Activated CD4-positive, alpha-beta memory T cell treated with anti-CD3 and anti-CD28 coated beads for 36 hours (primary cell): ENCODE measurements at regions of chr15 and their contacts with region 1.

Region 1: GRCh38 chr15:72473614-72474465 is at the start of gene ARIH1:
- DNase-seq: peak; percentile 96
- H3K4me3 Mint-ChIP-seq: peak within 1 kb of the TSS; percentile 92
- H3K27ac Mint-ChIP-seq: peak within 1 kb of the TSS; percentile 98
- H3K4me1 Mint-ChIP-seq: peaks cover 41% of the 10 kb centered on the region
- H3K27me3 Mint-ChIP-seq: no peaks in the 10 kb centered on the region
- total RNA-seq, gene ARIH1: 169 to 187 TPM

Region 2: GRCh38 chr15:72117486-72118399 is 356.1 kb before region 1 on chr15 and contains the start of gene MYO9A:
- CTCF ChIA-PET with region 1: no interaction called
- POLR2A ChIA-PET with region 1: no interaction called
- intact Hi-C with region 1: loop called (anchors 1 kb)
- DNase-seq: peak; percentile 100
- H3K4me3 Mint-ChIP-seq: peak within 1 kb of the TSS; percentile 98
- H3K27ac Mint-ChIP-seq: peak within 1 kb of the TSS; percentile 98
- H3K4me1 Mint-ChIP-seq: peaks cover 34% of the 10 kb centered on the region
- H3K27me3 Mint-ChIP-seq: no peaks in the 10 kb centered on the region
- total RNA-seq, gene MYO9A: 18.3 to 20.2 TPM

Region 3: GRCh38 chr15:72272213-72273002 is 201.4 kb before region 1 on chr15 and contains the start of gene PARP6:
- CTCF ChIA-PET with region 1: no interaction called
- POLR2A ChIA-PET with region 1: no interaction called
- intact Hi-C with region 1: loop called (anchors 2 kb)
- DNase-seq: peak; percentile 99
- H3K4me3 Mint-ChIP-seq: peak within 1 kb of the TSS; percentile 84
- H3K27ac Mint-ChIP-seq: peak within 1 kb of the TSS; percentile 89
- H3K4me1 Mint-ChIP-seq: peaks cover 33% of the 10 kb centered on the region
- H3K27me3 Mint-ChIP-seq: no peaks in the 10 kb centered on the region
- total RNA-seq, gene PARP6: 42.8 to 44.5 TPM

Region 4: GRCh38 chr15:72375847-72376581 is 97.8 kb before region 1 on chr15 and contains the start of gene HEXA:
- CTCF ChIA-PET with region 1: no interaction called
- POLR2A ChIA-PET with region 1: interaction called, 10 read pairs
- intact Hi-C with region 1: loop called (anchors 1 kb)
- DNase-seq: peak; percentile 98
- H3K4me3 Mint-ChIP-seq: peak within 1 kb of the TSS; percentile 91
- H3K27ac Mint-ChIP-seq: peak within 1 kb of the TSS; percentile 92
- H3K4me1 Mint-ChIP-seq: peaks cover 32% of the 10 kb centered on the region
- H3K27me3 Mint-ChIP-seq: peaks cover 1% of the 10 kb centered on the region
- total RNA-seq, gene HEXA: 57.5 to 59.8 TPM

Region 5: GRCh38 chr15:72445426-72445825 is 28.4 kb before region 1 on chr15:
- CTCF ChIA-PET with region 1: no interaction called
- POLR2A ChIA-PET with region 1: no interaction called
- intact Hi-C with region 1: no loop called
- DNase-seq: no peak
- H3K4me3 Mint-ChIP-seq: no peak overlapping the region
- H3K27ac Mint-ChIP-seq: no peak overlapping the region
- H3K4me1 Mint-ChIP-seq: no peaks in the 10 kb centered on the region
- H3K27me3 Mint-ChIP-seq: peaks cover 7% of the 10 kb centered on the region

Region 6: DNA sequence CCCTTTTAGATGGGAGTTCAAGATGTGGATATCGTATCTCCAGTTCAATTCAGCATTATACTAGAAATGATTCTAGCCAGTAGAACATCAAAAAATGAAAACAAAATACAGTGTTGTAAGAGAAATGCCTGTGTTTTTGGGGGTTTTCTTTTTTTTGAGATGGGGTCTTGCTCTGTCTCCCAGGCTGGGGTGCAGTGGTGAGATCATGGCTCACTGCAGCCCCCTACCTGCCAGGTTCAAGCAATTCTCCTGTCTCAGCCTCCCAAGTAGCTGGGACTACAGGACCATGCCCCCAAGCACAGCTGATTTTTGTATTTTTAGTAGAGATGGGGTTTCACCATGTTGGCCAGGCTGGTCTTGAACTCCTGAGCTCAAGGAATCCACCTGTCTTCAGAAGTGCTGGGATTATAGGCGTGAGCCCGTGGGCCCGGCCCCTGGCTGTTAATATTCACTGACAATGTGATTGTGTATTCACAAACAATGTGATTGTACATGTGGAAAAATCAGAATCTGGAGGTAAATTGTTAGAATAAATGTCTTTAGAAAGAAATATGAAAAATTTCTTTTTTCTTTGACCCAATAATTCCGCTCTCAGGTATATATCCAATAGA is 59.3 kb after region 1 on chr15:
- CTCF ChIA-PET with region 1: interaction called, 5 read pairs
- POLR2A ChIA-PET with region 1: no interaction called
- intact Hi-C with region 1: loop called (anchors 2 kb)
- DNase-seq: peak; percentile 40
- H3K4me3 Mint-ChIP-seq: no peak overlapping the region
- H3K27ac Mint-ChIP-seq: no peak overlapping the region
- H3K4me1 Mint-ChIP-seq: peaks cover 37% of the 10 kb centered on the region
- H3K27me3 Mint-ChIP-seq: no peaks in the 10 kb centered on the region

Region 7: GRCh38 chr15:72671535-72671934 is 197.7 kb after region 1 on chr15:
- CTCF ChIA-PET with region 1: no interaction called
- POLR2A ChIA-PET with region 1: no interaction called
- intact Hi-C with region 1: loop called (anchors 5 kb)
- DNase-seq: no peak
- H3K4me3 Mint-ChIP-seq: no peak overlapping the region
- H3K27ac Mint-ChIP-seq: no peak overlapping the region
- H3K4me1 Mint-ChIP-seq: peaks cover 4% of the 10 kb centered on the region
- H3K27me3 Mint-ChIP-seq: peaks cover 12% of the 10 kb centered on the region

Region 8: DNA sequence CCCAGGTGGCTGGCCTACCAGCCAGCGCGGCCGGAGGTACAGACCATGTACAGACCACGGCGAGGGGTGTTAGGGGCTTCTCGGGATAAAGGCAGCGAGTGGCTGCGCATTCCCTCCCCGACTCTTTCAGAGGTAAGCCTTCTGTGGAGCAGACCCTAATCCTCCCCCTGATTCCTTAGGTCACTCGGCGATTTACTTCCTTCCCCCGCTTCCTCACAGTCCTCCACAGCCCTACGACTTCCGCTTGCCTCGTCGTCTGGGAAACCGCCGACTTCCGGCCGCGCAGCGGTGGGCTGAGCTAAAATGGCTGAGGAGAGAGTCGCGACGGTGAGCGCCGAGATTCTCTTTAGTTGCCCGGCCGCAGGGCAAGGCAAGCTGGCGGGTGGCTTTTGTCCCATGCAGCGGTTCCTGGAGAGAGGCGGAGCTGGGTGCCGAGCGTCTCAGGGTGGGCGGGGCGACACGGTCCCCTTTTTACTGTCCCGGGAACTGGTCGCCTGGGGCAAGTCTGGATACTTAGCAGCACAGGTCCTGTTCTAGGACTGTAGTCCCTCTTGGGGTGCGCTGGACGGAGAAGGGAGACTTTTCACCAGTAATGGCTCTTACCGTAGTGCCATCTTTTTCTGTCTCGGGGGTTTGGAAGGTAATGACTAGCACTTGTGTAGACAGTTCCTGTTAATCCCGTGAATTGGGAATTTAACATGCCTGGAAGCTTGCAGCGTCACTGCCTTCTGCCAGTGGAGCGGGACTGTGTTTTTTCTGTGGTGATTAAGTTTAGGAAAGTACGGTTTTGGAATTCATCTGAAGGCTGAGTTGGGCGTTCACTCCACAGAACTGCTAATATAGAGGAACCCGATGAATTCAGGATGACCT is 212.3 kb after region 1 on chr15 and contains the starts of genes BBS4 and HIGD2B:
- CTCF ChIA-PET with region 1: no interaction called
- POLR2A ChIA-PET with region 1: interaction called, 3 read pairs
- intact Hi-C with region 1: loop called (anchors 5 kb)
- DNase-seq: peak; percentile 93
- H3K4me3 Mint-ChIP-seq: peak within 1 kb of the TSS; percentile 85
- H3K27ac Mint-ChIP-seq: peak within 1 kb of the TSS; percentile 89
- H3K4me1 Mint-ChIP-seq: peaks cover 13% of the 10 kb centered on the region
- H3K27me3 Mint-ChIP-seq: no peaks in the 10 kb centered on the region
- total RNA-seq, gene BBS4: 12.6 to 15.5 TPM
- total RNA-seq, gene HIGD2B: 0.27 to 0.31 TPM